ENCODE measurements at regions of chr11 and their contacts with region 1.

Region 1: DNA sequence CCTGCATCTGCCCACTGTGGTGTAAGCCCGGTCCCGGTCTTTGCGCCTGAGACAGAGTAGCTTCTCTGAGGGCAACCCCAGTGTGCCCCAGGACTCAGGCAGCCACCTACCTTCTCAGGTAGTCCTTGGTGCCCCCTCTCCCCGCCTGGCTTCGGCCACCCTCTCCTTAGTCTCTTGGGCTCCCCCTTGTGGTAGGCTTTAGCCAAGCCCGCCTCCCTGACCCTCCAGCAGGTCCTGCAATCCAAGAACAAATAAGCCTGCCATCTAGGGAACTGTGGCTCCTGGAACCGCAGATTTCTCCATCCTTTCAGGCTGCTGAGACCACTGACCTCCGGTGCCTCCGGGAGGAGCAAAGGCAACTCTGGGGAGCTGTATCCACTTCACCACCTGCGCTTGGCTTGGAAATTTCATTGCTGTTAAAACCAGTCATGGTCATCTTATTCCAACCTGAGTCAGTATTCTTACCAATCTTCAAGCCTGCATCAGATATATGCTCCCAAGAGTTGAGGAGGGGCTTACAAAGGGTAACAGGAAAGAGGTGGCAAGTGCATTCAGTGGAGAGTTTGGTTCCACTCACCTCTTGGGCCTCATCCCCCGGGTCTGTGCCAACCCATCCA is 52.8 kb upstream of the TENM4 start:
- DNase-seq: peak; percentile 70 to 85 (median 79)
- H3K4me3 ChIP-seq: no peak overlapping the region
- H3K27ac ChIP-seq: no peak overlapping the region
- H3K4me1 ChIP-seq: no peaks in the 10 kb centered on the region
- H3K27me3 ChIP-seq: no peaks in the 10 kb centered on the region
- CTCF ChIP-seq: peak; percentile 61 to 65 (median 63)
- EP300 ChIP-seq: no peak
- POLR2A ChIP-seq: no peak

Region 2: DNA sequence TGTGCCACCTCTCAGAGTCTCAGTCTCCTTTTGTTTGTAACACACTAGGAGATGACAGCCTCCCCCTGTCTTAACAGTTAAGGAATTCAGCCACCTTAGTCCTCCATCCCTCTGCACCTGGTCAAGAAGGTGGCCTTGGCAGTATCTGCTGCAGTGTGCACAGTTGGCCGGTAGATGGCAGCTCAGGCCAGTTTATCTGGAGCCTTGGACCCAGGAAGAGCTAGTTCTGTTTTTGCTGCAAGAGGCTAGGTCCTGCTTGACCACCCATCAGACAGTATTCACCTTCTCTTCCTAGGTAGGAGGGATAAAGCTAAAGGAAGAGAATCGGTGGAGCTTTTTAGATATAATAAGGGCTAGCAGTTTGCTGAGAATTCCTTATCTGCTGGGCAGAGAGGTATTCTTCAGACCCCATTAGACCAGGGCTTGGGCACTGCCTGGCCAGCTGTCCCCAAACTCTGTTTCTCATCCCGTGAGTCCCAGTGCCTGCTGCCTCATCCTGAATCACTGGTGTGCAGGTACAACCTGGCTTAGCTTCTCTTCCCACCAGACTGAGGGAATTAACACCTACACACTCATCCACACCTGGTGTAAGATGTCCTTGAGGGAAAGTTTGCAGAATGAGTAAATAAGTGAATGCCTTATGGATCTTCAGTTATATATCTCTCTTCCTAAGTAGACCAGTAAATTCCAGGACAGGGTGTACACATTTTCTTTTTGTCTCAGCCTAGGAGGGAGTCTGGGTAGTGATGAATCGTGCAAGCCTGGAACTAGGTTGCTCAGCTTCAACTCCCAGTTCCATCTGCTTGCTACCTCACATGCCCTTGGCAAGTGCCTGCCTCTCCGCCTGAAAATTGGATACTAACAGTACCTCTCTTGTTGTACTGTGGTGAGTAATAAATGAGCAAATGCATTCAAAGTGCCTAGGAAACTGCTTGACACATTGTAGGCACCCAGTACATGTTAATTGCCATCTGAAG is 848.1 kb before region 1 on chr11:
- intact Hi-C with region 1: loop called in 1 of 4 experiments (anchors 10 kb)
- DNase-seq: peak; percentile 56 to 84 (median 72)
- H3K4me3 ChIP-seq: no peak overlapping the region
- H3K27ac ChIP-seq: no peak overlapping the region
- H3K4me1 ChIP-seq: peaks cover 2% of the 10 kb centered on the region
- H3K27me3 ChIP-seq: no peaks in the 10 kb centered on the region
- CTCF ChIP-seq: peak; percentile 79 to 86 (median 81)
- EP300 ChIP-seq: no peak
- POLR2A ChIP-seq: no peak

Region 3: DNA sequence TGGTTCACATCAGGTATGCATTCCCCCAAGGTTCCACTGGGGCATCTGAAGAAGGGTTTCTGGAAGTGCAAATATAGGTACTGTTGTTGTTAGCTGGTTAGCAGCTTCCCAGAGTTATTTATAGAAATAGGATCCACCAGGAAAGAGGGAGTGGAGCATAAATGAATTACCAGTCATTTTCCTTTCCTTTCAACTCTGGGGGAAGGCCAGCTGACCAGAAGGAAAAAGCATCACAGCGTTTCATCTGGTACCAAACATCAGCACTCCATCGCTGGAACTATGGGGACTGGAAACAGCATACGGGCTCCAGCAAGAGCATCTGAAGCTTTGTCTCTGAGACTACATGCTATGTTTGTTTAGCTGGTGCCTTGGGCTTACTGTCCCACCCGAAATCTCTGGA is 540.8 kb before region 1 on chr11:
- intact Hi-C with region 1: loop called in 1 of 4 experiments (anchors 5 kb)
- DNase-seq: no peak
- H3K4me3 ChIP-seq: no peak overlapping the region
- H3K27ac ChIP-seq: no peak overlapping the region
- H3K4me1 ChIP-seq: peaks cover 3% of the 10 kb centered on the region
- H3K27me3 ChIP-seq: no peaks in the 10 kb centered on the region
- CTCF ChIP-seq: no peak
- EP300 ChIP-seq: no peak
- POLR2A ChIP-seq: no peak

Region 4: GRCh38 chr11:79594834-79595233 is 101.2 kb after region 1 on chr11:
- intact Hi-C with region 1: no loop called
- DNase-seq: no peak
- H3K4me3 ChIP-seq: no peak overlapping the region
- H3K27ac ChIP-seq: no peak overlapping the region
- H3K4me1 ChIP-seq: no peaks in the 10 kb centered on the region
- H3K27me3 ChIP-seq: no peaks in the 10 kb centered on the region
- CTCF ChIP-seq: no peak
- EP300 ChIP-seq: no peak
- POLR2A ChIP-seq: no peak

Measured in ovary (tissue), 10 donors.